Activated CD4-positive, alpha-beta T cell treated with anti-CD3 and anti-CD28 coated beads for 36 hours (primary cell): ENCODE measurements at regions of chr20 and their contacts with region 1.

Region 1: GRCh38 chr20:18587665-18588573 is at the start of gene DTD1:
- DNase-seq: peak; percentile 96
- ATAC-seq: peak; percentile 92
- H3K4me3 Mint-ChIP-seq: peak within 1 kb of the TSS; percentile 89
- H3K27ac Mint-ChIP-seq: peak within 1 kb of the TSS; percentile 82
- H3K4me1 Mint-ChIP-seq: peaks cover 25% of the 10 kb centered on the region
- H3K27me3 Mint-ChIP-seq: peaks cover 6% of the 10 kb centered on the region
- total RNA-seq, gene DTD1: 40.7 to 54.6 TPM

Region 2: DNA sequence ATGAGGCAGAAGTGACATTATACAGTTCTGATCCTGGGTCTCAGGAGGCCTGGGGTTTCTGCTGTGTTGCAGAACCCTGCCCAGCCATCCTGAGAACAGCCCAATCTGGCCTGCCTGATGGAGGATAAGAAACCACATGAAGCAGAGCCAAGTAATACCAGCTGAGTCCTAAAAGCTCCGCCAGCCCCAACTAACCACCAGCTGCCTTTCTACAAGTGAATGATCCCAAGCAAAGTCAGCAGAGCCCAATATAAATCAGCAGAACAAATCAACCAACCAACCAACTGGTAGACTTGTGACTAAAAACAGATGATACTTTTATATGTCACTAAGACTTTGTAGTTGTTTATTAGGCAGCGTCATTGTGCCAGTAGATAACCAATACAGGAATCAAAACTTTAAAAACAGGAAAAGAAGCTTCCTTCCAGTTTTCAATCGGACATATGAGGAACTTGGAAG is 671.5 kb before region 1 on chr20:
- CTCF ChIA-PET with region 1: no interaction called
- POLR2A ChIA-PET with region 1: no interaction called
- intact Hi-C with region 1: no loop called
- DNase-seq: no peak
- ATAC-seq: peak; percentile 66
- H3K4me3 Mint-ChIP-seq: no peak overlapping the region
- H3K27ac Mint-ChIP-seq: no peak overlapping the region
- H3K4me1 Mint-ChIP-seq: no peaks in the 10 kb centered on the region
- H3K27me3 Mint-ChIP-seq: peaks cover 12% of the 10 kb centered on the region

Region 3: GRCh38 chr20:18719445-18719844 is 131.5 kb after region 1 on chr20:
- CTCF ChIA-PET with region 1: no interaction called
- POLR2A ChIA-PET with region 1: no interaction called
- intact Hi-C with region 1: no loop called
- DNase-seq: no peak
- ATAC-seq: no peak
- H3K4me3 Mint-ChIP-seq: no peak overlapping the region
- H3K27ac Mint-ChIP-seq: no peak overlapping the region
- H3K4me1 Mint-ChIP-seq: peaks cover 5% of the 10 kb centered on the region
- H3K27me3 Mint-ChIP-seq: no peaks in the 10 kb centered on the region

Region 4: GRCh38 chr20:18793625-18794427 is 205.9 kb after region 1 on chr20:
- CTCF ChIA-PET with region 1: no interaction called
- POLR2A ChIA-PET with region 1: no interaction called
- intact Hi-C with region 1: loop called (anchors 2 to 5 kb)
- DNase-seq: peak; percentile 92
- ATAC-seq: peak; percentile 98
- H3K4me3 Mint-ChIP-seq: peak overlapping the region; percentile 87
- H3K27ac Mint-ChIP-seq: peak overlapping the region; percentile 96
- H3K4me1 Mint-ChIP-seq: peaks cover 17% of the 10 kb centered on the region
- H3K27me3 Mint-ChIP-seq: peaks cover 7% of the 10 kb centered on the region

Region 5: DNA sequence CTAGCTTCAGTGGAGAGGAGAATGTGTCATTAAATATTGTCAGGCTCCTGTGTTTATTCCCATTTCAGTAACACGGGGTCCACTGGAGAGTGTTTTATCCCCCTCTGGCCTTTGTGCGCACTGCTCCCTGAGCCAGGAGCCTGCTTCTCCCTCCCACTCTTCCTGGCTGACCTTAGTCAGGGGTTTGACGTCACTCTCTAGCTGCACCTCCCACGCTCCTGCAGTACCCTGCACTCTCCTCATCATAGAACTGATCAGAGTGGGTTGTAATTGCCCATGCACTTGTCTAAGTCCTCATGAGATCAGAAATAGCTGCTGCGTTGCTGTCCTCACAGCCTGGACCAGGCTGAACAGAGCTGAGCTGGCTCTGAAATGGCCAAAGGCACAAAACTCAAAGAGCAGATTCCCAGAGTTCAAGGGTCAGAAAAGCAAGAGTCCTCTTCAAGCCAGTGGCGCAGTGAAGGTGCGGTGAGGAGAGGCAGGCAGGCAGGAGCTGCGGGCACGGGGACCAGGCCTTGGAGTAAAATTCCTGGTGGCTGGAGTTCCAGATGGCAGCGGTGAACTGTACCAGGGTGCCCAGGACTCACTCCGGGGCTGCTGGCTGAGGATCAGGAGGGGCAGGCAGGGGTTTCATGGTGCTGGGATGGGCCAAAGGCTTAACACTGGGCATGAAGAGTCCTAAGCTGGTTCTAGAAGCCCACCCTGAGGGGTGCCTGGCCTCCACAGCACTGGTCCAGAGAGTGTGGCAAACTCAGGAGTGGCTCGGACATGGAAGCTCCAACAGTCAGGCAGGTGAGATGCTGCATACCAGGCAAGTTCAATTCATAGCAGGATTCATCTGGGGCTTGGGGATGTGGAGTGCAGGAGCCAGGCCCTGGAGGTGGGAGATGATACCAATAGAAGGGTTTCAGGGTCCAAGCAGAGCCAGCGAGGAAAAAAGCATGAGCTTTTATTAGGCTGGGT is 396.6 kb after region 1 on chr20:
- CTCF ChIA-PET with region 1: no interaction called
- POLR2A ChIA-PET with region 1: no interaction called
- intact Hi-C with region 1: no loop called
- DNase-seq: no peak
- ATAC-seq: no peak
- H3K4me3 Mint-ChIP-seq: no peak overlapping the region
- H3K27ac Mint-ChIP-seq: no peak overlapping the region
- H3K4me1 Mint-ChIP-seq: no peaks in the 10 kb centered on the region
- H3K27me3 Mint-ChIP-seq: peaks cover 4% of the 10 kb centered on the region

Region 6: DNA sequence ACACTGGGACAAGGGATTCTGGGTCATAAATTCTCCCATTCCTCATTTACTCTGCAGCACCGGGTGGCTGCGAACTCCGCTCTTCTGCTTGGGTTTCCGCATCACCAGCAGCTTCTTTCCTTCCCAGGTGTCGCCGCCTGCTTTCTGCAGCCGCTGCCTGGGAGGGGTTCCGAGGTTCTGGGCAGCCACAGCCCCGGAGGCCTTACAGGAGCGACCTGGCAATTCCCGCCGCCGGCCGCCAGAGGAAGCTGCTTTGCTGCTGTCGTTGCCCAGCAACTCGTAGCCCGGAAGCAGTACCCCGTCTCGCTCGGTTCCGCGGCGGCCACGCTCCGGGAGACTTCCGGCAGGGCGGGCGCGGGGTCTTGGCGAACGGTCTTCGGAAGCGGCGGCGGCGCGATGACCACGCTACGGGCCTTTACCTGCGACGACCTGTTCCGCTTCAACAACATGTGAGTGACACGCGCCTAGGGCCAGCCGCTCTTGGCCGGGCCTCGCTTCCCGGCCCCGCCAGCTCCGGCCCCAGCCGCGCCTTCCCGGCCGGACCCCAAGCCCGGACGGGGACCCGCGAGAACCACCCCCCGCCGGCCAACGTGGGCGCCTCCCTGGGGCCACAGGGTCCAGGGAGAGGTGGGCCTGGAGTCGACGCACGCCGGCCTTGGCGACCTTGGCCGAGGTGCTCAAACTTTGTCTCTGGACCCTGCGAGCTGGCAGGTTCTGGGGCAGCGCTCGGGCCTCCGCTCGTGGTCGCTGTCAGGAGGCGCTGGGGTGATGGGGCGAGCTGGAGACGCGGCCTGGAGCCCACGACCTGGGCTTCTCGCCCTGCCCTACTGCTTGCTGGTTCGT is 1429.3 kb after region 1 on chr20 and contains the start of gene NAA20:
- CTCF ChIA-PET with region 1: no interaction called
- POLR2A ChIA-PET with region 1: no interaction called
- intact Hi-C with region 1: loop called in 1 of 2 experiments (anchors 2 kb)
- DNase-seq: peak; percentile 96
- ATAC-seq: peak; percentile 98
- H3K4me3 Mint-ChIP-seq: peak within 1 kb of the TSS; percentile 93
- H3K27ac Mint-ChIP-seq: peak within 1 kb of the TSS; percentile 88
- H3K4me1 Mint-ChIP-seq: peaks cover 54% of the 10 kb centered on the region
- H3K27me3 Mint-ChIP-seq: no peaks in the 10 kb centered on the region
- total RNA-seq, gene NAA20: 58.6 to 88.7 TPM